ENCODE measurements at regions of chr3 and their contacts with region 1.

Region 1: GRCh38 chr3:119279101-119279554 is 15.1 kb upstream of the ARHGAP31 start:
- DNase-seq: peak in 1 of 10 donors; percentile 58
- H3K4me3 ChIP-seq: peak overlapping the region in 4 of 59 donors; percentile 10 to 30 (median 16)
- H3K27ac ChIP-seq: peak overlapping the region in 53 of 59 donors; percentile 5 to 88 (median 69)
- H3K27me3 ChIP-seq: no peaks in the 10 kb centered on the region
- CTCF ChIP-seq: no peak

Region 2: DNA sequence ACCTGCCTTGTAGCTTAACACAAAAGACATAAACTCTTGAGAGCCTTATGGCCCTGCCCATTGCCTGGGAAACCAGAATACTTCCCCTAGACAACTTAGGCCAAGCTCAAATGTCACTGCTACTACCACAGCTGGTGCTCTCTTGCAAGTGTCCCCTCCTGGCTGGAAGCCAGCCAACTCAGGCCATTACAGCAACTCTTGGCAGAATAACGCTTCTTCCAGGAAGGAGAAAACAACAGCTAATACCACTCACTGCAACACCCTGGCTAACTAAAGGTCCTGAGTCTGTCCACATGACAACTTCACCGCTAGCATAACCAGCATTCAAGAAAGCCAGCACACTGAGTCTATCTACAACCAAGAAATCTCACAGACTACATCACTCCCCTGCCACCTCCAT is 33.4 kb before region 1 on chr3:
- intact Hi-C with region 1: no loop called
- DNase-seq: no peak
- H3K4me3 ChIP-seq: no peak overlapping the region
- H3K27ac ChIP-seq: no peak overlapping the region
- H3K27me3 ChIP-seq: no peaks in the 10 kb centered on the region
- CTCF ChIP-seq: no peak

Region 3: DNA sequence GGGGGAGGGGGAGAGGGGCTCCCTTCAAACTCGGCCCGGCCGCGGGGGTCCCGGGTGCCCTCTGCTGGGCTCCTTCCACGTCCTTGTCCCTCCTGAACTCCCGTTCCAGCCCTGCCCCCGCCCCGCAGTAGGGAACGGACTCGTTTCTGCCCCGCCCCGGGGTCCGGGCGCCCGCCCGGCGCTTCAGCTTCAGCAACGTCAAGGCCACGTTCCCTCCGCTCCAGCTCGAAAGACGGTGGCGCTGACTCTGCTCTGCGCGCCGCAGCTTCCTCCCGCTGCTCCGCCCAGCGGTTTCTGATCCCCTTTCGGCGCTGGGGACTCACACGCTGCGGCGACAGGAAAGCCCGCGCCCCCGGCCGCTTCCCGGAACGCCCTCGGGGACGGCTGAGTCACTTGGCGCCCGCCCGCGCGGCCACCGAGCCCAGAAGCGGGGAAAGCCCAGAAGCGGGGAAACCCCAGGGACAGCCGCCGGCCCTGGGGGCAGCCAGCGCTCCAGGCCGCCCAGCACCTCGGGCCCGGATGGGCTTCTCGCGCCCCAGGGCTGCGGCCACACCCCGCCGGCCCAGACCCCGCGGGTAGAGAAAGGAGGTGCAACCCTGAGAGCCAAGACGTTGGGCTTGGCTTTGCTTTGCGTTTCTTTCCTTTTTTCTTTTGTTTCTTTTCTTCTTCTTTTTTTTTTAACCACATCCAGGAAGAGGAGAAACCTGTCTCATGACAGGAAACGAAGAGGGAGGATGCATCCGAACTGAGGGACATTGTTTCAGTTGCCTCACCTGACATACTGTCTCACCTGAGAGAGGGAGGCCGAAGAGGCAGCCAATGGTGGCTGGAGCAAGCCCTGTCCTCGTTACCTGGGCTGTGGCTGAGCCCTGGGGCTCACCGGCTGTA is 44.0 kb after region 1 on chr3:
- intact Hi-C with region 1: loop called in 1 of 2 experiments (anchors 5 kb)
- DNase-seq: peak; percentile 18 to 88 (median 64)
- H3K4me3 ChIP-seq: peak overlapping the region; percentile 47 to 83 (median 70)
- H3K27ac ChIP-seq: peak overlapping the region; percentile 51 to 95 (median 86)
- H3K27me3 ChIP-seq: no peaks in the 10 kb centered on the region
- CTCF ChIP-seq: peak in 26 of 56 donors; percentile 6 to 47 (median 19)

Region 4: GRCh38 chr3:119469381-119470189 is 190.5 kb after region 1 on chr3:
- intact Hi-C with region 1: loop called in 1 of 2 experiments (anchors 5 kb)
- DNase-seq: peak in 3 of 10 donors; percentile 8 to 23 (median 21)
- H3K4me3 ChIP-seq: peak overlapping the region; percentile 68 to 100 (median 93)
- H3K27ac ChIP-seq: peak overlapping the region in 49 of 59 donors; percentile 32 to 95 (median 83)
- H3K27me3 ChIP-seq: no peaks in the 10 kb centered on the region
- CTCF ChIP-seq: peak in 6 of 56 donors; percentile 0 to 26 (median 4)

Measured in dorsolateral prefrontal cortex (tissue), 120 donors.